ENCODE measurements at regions of chr20 and their contacts with region 1.

Region 1: DNA sequence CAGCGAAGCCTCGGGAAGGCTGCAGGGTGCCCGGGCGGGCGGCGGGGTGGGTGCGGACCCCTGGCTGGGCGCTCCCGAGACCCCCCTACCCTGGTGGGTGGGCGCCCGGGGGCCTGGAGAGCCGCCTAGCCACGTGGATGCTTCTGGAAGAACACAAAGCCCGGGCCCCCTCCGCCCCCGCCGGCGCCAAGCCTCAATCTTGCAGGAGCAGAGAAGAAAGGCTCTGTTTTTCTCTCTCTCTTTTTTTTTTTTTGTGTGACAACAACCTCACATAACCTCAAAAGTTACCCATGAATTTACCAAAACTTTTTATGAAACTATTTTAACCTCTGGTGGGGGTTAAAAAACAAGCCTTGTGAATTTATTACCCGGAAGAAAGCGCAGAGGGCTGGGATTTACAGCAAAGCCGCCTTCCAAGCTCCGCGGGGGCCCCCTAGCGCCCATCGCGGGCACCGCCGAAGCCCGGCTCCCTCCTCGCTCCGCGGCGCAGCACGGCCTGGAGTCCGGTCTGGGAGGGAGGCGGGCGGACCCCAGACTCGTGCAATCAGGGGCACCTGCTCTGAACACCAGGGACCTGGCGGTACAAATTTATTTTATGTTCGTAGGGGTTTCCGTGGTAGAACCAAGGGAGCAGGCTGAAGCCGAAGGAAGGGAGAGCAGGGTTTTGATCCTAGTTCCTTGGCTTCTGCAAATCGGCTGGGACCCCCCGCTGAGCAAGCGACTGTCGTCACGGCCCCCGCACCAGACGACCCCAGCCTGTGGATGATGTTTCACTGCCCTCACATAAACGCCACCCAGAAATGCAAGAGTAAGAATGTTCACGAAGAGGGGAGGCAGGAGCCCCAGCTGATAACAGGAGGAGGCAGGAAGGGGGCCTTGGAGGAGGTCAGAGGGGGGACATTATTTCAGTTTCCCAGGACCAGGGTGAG is 58.9 kb downstream of the ZNF831 start:
- DNase-seq: peak; percentile 92
- H3K4me3 ChIP-seq: peak overlapping the region; percentile 47 to 55
- H3K27ac ChIP-seq: peak overlapping the region in 1 of 2 experiments; percentile 64; a peak in 1 of 4 replicates
- H3K4me1 ChIP-seq: peaks cover 0 to 23% of the 10 kb centered on the region in 2 experiments; a peak in 2 of 4 replicates
- H3K27me3 ChIP-seq: peaks cover 7% of the 10 kb centered on the region; the same call in 1 of the 2 replicates
- CTCF ChIP-seq: peak; percentile 97
- EP300 ChIP-seq: 0 out of 4 replicates have a peak, but pooled peaks of 1 of the 2 experiments have one; percentile 7
- RAD21 ChIP-seq: peak; percentile 90

Region 2: GRCh38 chr20:58875541-58876134 is 346.9 kb before region 1 on chr20:
- CTCF ChIA-PET with region 1: interaction called, 47 read pairs
- POLR2A ChIA-PET with region 1: interaction called, 3 read pairs
- DNase-seq: no peak
- H3K4me3 ChIP-seq: no peak overlapping the region
- H3K27ac ChIP-seq: peak overlapping the region; percentile 24 to 75
- H3K4me1 ChIP-seq: peaks cover 0 to 55% of the 10 kb centered on the region in 2 experiments; a peak in 3 of 4 replicates
- H3K27me3 ChIP-seq: no peaks in the 10 kb centered on the region
- CTCF ChIP-seq: no peak
- EP300 ChIP-seq: no peak
- RAD21 ChIP-seq: no peak

Region 3: DNA sequence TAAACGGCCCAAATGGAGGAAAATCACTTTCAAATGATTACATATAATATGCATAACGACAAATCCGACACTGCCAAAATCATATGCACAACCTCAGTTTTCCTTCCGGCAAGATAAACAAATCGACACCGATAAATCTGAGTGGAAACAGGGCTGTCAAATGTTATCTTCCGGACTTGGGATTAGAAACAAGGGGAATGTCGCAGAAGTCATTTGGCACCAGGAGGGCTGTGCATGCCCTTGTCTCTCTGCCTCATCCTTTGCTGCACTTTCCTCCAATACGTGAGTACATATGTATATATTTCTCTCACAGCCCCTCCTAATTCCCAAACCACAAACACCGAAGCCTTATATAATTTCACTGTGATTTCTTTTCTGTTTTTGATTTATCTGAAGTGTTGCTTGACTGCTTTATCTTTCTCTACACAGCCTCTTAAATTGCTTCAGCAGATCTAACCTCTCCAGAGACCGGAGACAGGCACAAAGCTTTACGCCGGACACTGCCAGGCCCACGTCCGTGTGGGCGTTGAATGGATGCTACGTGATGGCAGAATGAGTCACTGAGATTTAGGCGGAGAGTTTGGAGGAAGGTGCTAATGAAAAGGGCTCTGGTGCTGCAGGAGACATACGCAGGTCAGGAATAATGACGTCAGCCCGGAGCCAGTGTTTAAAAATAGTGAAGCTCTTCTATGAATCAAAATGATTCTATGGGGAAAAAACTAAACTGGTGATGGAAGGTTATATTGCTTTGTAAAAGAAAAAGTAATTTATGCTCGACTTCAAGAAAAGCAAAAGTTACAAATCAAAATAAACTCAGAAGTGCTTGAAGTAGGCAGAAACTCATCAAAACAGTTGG is 158.9 kb before region 1 on chr20:
- CTCF ChIA-PET with region 1: interaction called, 12 read pairs
- POLR2A ChIA-PET with region 1: no interaction called
- DNase-seq: peak; percentile 45
- H3K4me3 ChIP-seq: peak overlapping the region; percentile 4 to 31; a peak in 2 of 4 replicates
- H3K27ac ChIP-seq: peak overlapping the region in 1 of 2 experiments; percentile 81; a peak in 3 of 4 replicates
- H3K4me1 ChIP-seq: peaks cover 8 to 16% of the 10 kb centered on the region in 2 experiments; a peak in 3 of 4 replicates
- H3K27me3 ChIP-seq: no peaks in the 10 kb centered on the region
- CTCF ChIP-seq: no peak
- EP300 ChIP-seq: no peak
- RAD21 ChIP-seq: no peak

Region 4: DNA sequence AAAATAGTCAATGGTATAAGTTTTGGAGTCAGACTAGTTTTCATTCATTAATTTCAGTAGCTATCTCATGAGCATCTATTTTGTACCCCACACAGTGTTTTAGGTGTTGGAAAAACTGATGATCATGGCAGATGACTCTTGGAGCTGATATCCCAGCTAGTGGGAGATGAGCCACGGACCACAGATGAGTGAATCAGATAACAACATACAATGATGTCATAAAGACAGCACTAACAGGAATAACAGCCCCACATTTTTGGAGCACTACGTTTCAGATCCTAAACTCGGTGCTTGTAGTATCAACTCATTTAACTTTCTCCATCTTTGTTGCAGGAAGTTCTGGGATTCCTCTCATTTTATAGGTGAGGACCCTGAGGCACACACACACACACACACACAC is 10.1 kb after region 1 on chr20:
- CTCF ChIA-PET with region 1: interaction called, 10 read pairs
- POLR2A ChIA-PET with region 1: interaction called, 3 read pairs
- DNase-seq: no peak
- H3K4me3 ChIP-seq: no peak overlapping the region
- H3K27ac ChIP-seq: no peak overlapping the region
- H3K4me1 ChIP-seq: peaks cover 0 to 15% of the 10 kb centered on the region in 2 experiments; a peak in 2 of 4 replicates
- H3K27me3 ChIP-seq: no peaks in the 10 kb centered on the region
- CTCF ChIP-seq: no peak
- EP300 ChIP-seq: no peak
- RAD21 ChIP-seq: no peak

Region 5: GRCh38 chr20:59403261-59403961 is 180.9 kb after region 1 on chr20:
- CTCF ChIA-PET with region 1: interaction called, 106 read pairs
- POLR2A ChIA-PET with region 1: no interaction called
- DNase-seq: peak; percentile 95
- H3K4me3 ChIP-seq: peak overlapping the region; percentile 21 to 58
- H3K27ac ChIP-seq: peak overlapping the region in 1 of 2 experiments; percentile 50; a peak in 1 of 4 replicates
- H3K4me1 ChIP-seq: peaks cover 0 to 29% of the 10 kb centered on the region in 2 experiments; a peak in 2 of 4 replicates
- H3K27me3 ChIP-seq: peaks cover 8% of the 10 kb centered on the region; the same call in 1 of the 2 replicates
- CTCF ChIP-seq: peak; percentile 97
- EP300 ChIP-seq: peak in 1 of 2 experiments; percentile 26; a peak in 1 of 4 replicates
- RAD21 ChIP-seq: peak; percentile 91

Measured in SK-N-SH (cell line).